Activated naive CD4-positive, alpha-beta T cell treated with anti-CD3 and anti-CD28 coated beads for 36 hours (primary cell): ENCODE measurements at regions of chr17 and their contacts with region 1.

Region 1: GRCh38 chr17:17496189-17497064 is at the start of gene RASD1:
- DNase-seq: peak; percentile 81
- H3K4me3 Mint-ChIP-seq: peak within 1 kb of the TSS; percentile 64
- H3K27ac Mint-ChIP-seq: no peak within 1 kb of the TSS
- H3K4me1 Mint-ChIP-seq: peaks cover 12% of the 10 kb centered on the region
- H3K27me3 Mint-ChIP-seq: peaks cover 12% of the 10 kb centered on the region
- total RNA-seq, gene RASD1: 0.17 to 0.36 TPM

Region 2: GRCh38 chr17:17356149-17356930 is 140.1 kb before region 1 on chr17:
- CTCF ChIA-PET with region 1: interaction called, 12 read pairs
- intact Hi-C with region 1: loop called (anchors 1 kb)
- DNase-seq: peak; percentile 83
- H3K4me3 Mint-ChIP-seq: no peak overlapping the region
- H3K27ac Mint-ChIP-seq: no peak overlapping the region
- H3K4me1 Mint-ChIP-seq: no peaks in the 10 kb centered on the region
- H3K27me3 Mint-ChIP-seq: no peaks in the 10 kb centered on the region

Region 3: DNA sequence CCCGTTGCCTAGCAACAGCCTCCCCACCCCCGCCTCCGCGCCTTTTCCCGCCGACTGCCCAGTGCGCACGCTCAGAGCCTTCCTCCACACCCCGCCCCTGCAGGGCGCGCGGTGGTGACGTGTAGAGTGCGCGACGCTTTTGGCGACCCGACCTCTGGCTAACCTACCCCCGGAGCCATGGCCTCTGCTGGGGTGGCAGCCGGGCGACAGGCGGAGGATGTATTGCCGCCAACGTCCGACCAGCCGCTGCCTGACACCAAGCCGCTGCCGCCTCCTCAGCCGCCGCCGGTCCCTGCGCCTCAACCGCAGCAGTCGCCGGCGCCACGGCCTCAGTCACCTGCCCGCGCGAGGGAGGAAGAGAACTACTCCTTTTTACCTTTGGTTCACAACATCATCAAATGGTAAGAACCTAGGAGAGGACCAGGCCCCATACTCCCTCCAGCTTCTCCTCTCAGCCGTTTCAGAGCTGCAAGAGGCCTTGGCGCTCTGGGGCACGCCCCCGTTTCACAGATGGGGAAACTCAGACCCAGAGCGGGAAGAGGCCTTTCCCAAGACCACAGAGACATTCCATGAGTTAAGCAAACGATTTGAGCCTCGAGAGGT is 19.5 kb before region 1 on chr17 and contains the start of gene MED9:
- CTCF ChIA-PET with region 1: interaction called, 6 read pairs
- intact Hi-C with region 1: loop called (anchors 2 kb)
- DNase-seq: peak; percentile 96
- H3K4me3 Mint-ChIP-seq: peak within 1 kb of the TSS; percentile 88
- H3K27ac Mint-ChIP-seq: peak within 1 kb of the TSS; percentile 75
- H3K4me1 Mint-ChIP-seq: peaks cover 53% of the 10 kb centered on the region
- H3K27me3 Mint-ChIP-seq: no peaks in the 10 kb centered on the region
- total RNA-seq, gene MED9: 13.2 to 14.4 TPM

Region 4: DNA sequence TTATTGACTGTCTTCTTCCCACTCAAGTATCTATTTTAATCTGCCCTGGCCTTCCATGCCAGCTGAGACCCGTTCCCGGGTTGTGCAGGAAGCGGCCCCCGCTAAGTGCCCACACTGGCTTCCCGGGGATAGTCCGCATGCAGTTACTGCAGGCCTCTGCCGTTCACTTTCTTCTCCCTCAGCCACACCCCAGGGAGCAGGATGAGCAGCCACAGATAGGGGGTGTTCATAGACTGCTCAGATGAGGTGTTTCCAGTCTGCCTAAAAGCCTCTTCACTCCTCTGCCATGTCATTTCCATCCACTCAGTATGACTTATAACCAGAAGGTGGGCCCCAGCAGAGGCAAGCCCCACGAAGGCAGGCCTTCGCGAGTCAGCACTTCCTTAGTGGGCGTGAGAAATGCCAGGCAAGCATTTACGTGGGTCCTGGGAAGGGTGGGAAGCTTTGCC is 12.0 kb before region 1 on chr17:
- CTCF ChIA-PET with region 1: interaction called, 7 read pairs
- intact Hi-C with region 1: loop called (anchors 1 kb)
- DNase-seq: peak; percentile 79
- H3K4me3 Mint-ChIP-seq: no peak overlapping the region
- H3K27ac Mint-ChIP-seq: peak overlapping the region; percentile 37
- H3K4me1 Mint-ChIP-seq: peaks cover 42% of the 10 kb centered on the region
- H3K27me3 Mint-ChIP-seq: no peaks in the 10 kb centered on the region

Region 5: GRCh38 chr17:17568749-17569195 is 72.3 kb after region 1 on chr17:
- CTCF ChIA-PET with region 1: interaction called, 18 read pairs
- intact Hi-C with region 1: loop called (anchors 1 kb)
- DNase-seq: peak; percentile 78
- H3K4me3 Mint-ChIP-seq: no peak overlapping the region
- H3K27ac Mint-ChIP-seq: no peak overlapping the region
- H3K4me1 Mint-ChIP-seq: peaks cover 2% of the 10 kb centered on the region
- H3K27me3 Mint-ChIP-seq: no peaks in the 10 kb centered on the region

Region 6: DNA sequence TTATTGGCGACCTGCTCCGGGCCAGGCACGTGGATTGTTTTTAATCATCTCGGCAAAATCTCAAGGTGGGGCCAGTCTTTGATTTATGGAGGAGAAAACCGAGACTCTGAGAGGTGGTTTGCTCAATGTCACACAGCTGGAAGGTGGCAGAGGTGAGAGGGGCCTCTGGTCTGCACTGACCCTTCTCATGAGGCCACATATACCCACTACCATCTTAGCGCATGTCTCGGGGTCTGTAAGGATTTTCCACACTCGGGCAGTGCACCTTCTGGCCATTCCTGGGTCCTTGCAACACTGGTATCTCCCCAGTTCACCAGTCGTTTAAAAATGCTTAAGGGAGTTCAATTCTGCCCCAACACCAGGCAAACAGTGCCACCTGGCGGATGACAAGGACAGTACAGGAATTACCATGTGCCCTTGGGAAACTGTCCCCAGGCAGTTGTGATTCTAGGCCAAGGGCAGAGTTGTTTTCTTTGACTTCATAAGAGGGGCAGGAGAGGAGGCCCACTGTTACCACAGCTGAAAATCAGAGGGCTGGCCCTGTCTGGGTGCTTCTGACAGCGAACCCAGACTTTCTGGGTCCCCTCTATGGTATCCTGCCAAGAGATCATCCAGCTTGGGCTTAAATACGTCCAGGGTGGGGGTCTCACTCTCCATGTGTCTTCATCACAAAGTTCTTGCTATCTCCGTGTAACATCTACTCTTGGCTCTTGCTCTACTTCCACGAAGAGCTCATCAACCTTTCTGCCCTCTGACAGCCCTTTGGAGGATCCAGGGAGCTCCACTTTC is 145.4 kb after region 1 on chr17:
- CTCF ChIA-PET with region 1: interaction called, 59 read pairs
- intact Hi-C with region 1: loop called (anchors 1 kb)
- DNase-seq: peak; percentile 90
- H3K4me3 Mint-ChIP-seq: no peak overlapping the region
- H3K27ac Mint-ChIP-seq: no peak overlapping the region
- H3K4me1 Mint-ChIP-seq: no peaks in the 10 kb centered on the region
- H3K27me3 Mint-ChIP-seq: no peaks in the 10 kb centered on the region

Region 7: DNA sequence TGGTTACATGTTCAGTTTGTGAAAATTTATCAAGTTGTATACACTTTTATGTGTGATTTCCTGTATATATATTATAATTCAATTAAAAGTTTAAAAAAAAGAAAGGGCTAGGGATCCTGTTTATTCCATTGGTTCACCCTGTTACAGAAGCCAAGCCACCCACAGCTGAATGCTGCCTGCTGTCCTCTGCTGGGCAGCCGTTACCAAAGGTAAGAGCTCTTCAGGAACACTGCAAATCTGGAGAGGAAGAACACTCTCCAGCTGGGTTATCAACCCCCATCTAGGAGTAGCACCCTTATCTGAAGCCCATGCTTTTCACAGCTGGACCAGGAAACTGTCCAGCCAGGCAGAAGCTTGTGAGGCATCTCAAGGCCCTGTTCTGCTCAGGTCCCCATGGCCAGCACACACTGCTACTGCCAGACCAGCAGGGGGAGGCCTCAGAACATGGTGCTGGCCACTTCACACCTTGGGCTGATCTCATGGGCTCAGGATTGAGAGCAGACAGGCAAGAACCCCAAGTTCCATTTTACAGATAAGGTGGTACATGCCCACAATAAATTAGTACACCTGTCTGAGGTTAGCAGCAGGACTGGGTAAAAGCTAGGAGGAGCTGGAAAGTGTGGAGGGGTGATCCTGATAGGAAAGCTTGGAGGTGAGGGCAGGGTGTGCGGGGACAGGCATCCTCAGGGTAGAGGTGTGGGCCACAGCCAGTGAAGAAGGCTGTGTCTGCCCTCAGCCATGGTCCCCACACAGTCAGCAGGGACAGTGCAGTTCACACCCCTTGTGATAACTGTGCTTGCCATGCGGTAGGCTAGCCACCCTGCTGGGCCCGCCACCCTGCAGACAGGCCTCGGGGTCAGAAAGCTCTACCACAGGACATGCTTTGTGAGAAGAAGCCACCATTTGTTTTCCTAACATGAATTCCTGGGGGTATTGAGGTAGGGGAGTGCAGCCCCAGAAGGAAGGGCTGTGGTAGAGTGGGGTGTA is 394.6 kb after region 1 on chr17:
- CTCF ChIA-PET with region 1: no interaction called
- intact Hi-C with region 1: no loop called
- DNase-seq: peak; percentile 75
- H3K4me3 Mint-ChIP-seq: no peak overlapping the region
- H3K27ac Mint-ChIP-seq: no peak overlapping the region
- H3K4me1 Mint-ChIP-seq: peaks cover 2% of the 10 kb centered on the region
- H3K27me3 Mint-ChIP-seq: no peaks in the 10 kb centered on the region